ENCODE measurements at regions of chr11 and their contacts with region 1.

Region 1: DNA sequence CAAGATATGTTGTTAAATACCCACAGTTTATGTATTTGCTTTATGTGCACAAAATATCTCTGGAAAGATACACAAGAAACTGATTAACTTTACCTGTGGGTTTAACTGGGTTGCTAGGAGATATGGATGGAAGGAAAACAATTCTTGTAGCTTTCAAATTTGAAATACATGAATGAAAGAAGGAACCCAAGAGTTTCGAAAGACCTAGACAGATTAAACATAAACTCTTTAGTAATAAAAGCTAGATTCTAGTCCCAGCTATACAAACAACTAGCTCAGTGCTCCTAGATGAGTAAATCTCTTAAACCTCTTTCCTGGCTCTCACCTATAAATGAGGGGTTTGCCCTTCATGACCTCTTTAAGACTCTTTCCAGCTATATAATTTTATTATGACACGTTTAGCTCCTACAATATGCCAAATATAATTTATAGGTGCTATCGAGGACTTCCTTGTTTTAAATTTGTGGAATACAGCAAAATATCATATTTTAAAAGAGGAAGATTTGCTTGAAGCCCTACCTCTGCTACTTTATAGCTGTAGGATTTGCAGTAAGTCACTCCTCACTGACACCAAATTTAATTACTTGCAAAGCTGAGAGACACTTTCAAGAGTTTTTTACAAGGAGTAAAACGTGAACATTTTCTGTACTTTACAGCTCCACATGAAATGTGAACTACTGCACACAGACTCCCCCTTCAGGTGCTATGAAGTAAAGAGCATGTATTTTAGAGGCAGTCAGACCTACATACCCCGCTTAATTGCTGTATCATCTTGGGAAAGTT is 50.7 kb downstream of the RRAS2 start:
- DNase-seq: peak in 1 of 2 experiments; percentile 40
- H3K4me3 ChIP-seq: no peak overlapping the region
- H3K4me3 Mint-ChIP-seq: no peak overlapping the region
- H3K27ac Mint-ChIP-seq: no peak overlapping the region
- H3K4me1 ChIP-seq: peaks cover 36% of the 10 kb centered on the region
- H3K4me1 Mint-ChIP-seq: peaks cover 2% of the 10 kb centered on the region
- H3K27me3 ChIP-seq: no peaks in the 10 kb centered on the region
- H3K27me3 Mint-ChIP-seq: no peaks in the 10 kb centered on the region
- CTCF ChIP-seq: peak; percentile 39 to 75

Region 2: DNA sequence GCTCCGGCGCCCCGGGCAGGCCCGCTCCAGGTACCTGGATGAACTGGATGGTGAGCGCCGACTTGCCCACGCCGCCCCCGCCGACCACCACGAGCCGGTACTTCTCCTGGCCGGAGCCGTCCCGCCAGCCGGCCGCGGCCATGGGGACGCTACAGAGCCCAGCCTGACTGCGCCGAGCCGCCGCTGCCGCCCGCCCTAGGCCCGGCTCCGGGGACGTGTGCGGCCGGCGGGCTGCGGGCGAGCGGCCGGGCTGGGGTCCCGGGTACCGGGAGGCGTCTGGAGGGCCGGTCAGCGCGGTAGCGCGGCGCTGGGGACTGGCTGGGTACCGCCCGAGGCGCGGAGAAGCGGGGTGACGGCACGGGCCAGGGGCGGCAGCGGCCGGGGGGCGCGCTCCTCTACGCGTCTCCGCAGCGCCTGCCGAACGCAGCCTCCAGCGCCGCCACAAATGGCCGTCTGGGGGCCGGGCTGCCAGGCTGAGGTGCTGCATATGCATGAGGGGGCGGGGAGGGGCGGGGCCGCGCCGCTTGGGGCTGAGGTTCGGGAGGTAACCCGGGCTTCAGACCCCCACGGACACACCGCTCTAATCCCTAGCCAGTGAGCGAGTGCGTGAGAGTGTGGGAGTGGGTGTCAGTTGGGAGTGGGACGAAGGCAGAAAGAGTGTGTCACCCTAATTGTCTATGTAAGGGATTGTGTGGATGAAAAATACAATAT is 50.6 kb after region 1 on chr11 and contains the start of gene RRAS2:
- CTCF ChIA-PET with region 1: interaction called, 3 read pairs
- POLR2A ChIA-PET with region 1: interaction called, 7 read pairs
- intact Hi-C with region 1: loop called (anchors 1 kb)
- DNase-seq: peak; percentile 84 to 87
- H3K4me3 ChIP-seq: peak within 1 kb of the TSS; percentile 96
- H3K4me3 Mint-ChIP-seq: peak within 1 kb of the TSS; percentile 95
- H3K27ac Mint-ChIP-seq: peak within 1 kb of the TSS; percentile 97
- H3K4me1 ChIP-seq: no peaks in the 10 kb centered on the region
- H3K4me1 Mint-ChIP-seq: peaks cover 15% of the 10 kb centered on the region
- H3K27me3 ChIP-seq: no peaks in the 10 kb centered on the region
- H3K27me3 Mint-ChIP-seq: no peaks in the 10 kb centered on the region
- CTCF ChIP-seq: no peak
- total RNA-seq, gene RRAS2: 86.2 and 94.7 TPM in 2 replicates

Region 3: GRCh38 chr11:14373931-14374646 is 65.8 kb after region 1 on chr11:
- CTCF ChIA-PET with region 1: no interaction called
- POLR2A ChIA-PET with region 1: no interaction called
- intact Hi-C with region 1: loop called (anchors 5 kb)
- DNase-seq: peak in 1 of 2 experiments; percentile 9
- H3K4me3 ChIP-seq: no peak overlapping the region
- H3K4me3 Mint-ChIP-seq: no peak overlapping the region
- H3K27ac Mint-ChIP-seq: no peak overlapping the region
- H3K4me1 ChIP-seq: peaks cover 13% of the 10 kb centered on the region
- H3K4me1 Mint-ChIP-seq: peaks cover 7% of the 10 kb centered on the region
- H3K27me3 ChIP-seq: no peaks in the 10 kb centered on the region; the same call in 1 of the 2 replicates
- H3K27me3 Mint-ChIP-seq: no peaks in the 10 kb centered on the region
- CTCF ChIP-seq: no peak

Region 4: GRCh38 chr11:14454861-14455632 is 146.7 kb after region 1 on chr11:
- CTCF ChIA-PET with region 1: interaction called, 18 read pairs
- POLR2A ChIA-PET with region 1: no interaction called
- intact Hi-C with region 1: no loop called
- DNase-seq: no peak
- H3K4me3 ChIP-seq: no peak overlapping the region
- H3K4me3 Mint-ChIP-seq: no peak overlapping the region
- H3K27ac Mint-ChIP-seq: no peak overlapping the region
- H3K4me1 ChIP-seq: no peaks in the 10 kb centered on the region
- H3K4me1 Mint-ChIP-seq: no peaks in the 10 kb centered on the region
- H3K27me3 ChIP-seq: no peaks in the 10 kb centered on the region
- H3K27me3 Mint-ChIP-seq: no peaks in the 10 kb centered on the region
- CTCF ChIP-seq: peak; percentile 66 to 75